ENCODE measurements at regions of chr9 and their contacts with region 1.

Region 1: DNA sequence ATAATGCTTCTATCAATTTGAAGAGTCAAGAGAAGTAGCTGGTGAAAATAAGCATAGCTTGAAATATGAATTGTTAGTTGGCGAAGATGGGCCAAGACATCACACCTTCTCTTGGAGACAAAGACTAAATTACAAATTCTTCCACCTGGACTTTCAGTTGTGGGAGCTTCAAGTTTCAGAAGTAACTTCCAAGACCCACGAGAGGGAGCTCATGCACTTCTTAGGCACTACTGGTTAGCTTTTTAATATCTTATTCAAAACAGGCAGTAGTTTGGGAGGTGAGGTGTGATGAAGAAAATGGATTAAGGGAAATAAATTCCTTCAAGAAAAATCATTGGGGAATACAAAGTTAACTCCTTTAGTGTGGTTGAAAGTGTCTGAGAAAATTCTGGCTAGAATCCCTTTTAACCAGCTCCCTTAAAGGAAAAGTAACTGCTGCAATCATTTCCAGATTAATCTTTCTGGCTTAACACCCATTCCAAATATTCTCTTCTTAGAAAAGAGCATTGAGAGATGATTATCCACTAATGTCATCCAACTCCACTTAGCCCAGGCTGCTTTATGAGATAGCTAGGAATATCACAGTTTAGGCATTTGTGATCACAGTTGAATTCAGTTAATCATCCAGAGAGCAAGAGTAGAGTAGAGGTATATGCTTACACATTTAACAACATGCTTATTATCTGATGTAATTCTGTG is 139.5 kb upstream of the DMRTA1 start:
- DNase-seq: peak; percentile 13
- ATAC-seq: peak; percentile 63; the same call in 1 of the 2 replicates
- H3K4me3 Mint-ChIP-seq: no peak overlapping the region
- H3K27ac Mint-ChIP-seq: no peak overlapping the region
- H3K4me1 Mint-ChIP-seq: no peaks in the 10 kb centered on the region
- H3K27me3 Mint-ChIP-seq: no peaks in the 10 kb centered on the region; the same call in 1 of the 2 replicates
- CTCF ChIP-seq: peak; percentile 37; the same call in 1 of the 2 replicates

Region 2: GRCh38 chr9:22452415-22453010 is 145.4 kb after region 1 on chr9:
- CTCF ChIA-PET with region 1: interaction called, 95 read pairs
- POLR2A ChIA-PET with region 1: no interaction called
- DNase-seq: peak; percentile 39
- ATAC-seq: peak; percentile 29; the same call in 1 of the 2 replicates
- H3K4me3 Mint-ChIP-seq: no peak overlapping the region
- H3K27ac Mint-ChIP-seq: no peak overlapping the region
- H3K4me1 Mint-ChIP-seq: peaks cover 14% of the 10 kb centered on the region
- H3K27me3 Mint-ChIP-seq: no peaks in the 10 kb centered on the region
- CTCF ChIP-seq: peak; percentile 68; the same call in 1 of the 2 replicates